CD8-positive, alpha-beta memory T cell (primary cell): ENCODE measurements at regions of chr14 and their contacts with region 1.

Region 1: DNA sequence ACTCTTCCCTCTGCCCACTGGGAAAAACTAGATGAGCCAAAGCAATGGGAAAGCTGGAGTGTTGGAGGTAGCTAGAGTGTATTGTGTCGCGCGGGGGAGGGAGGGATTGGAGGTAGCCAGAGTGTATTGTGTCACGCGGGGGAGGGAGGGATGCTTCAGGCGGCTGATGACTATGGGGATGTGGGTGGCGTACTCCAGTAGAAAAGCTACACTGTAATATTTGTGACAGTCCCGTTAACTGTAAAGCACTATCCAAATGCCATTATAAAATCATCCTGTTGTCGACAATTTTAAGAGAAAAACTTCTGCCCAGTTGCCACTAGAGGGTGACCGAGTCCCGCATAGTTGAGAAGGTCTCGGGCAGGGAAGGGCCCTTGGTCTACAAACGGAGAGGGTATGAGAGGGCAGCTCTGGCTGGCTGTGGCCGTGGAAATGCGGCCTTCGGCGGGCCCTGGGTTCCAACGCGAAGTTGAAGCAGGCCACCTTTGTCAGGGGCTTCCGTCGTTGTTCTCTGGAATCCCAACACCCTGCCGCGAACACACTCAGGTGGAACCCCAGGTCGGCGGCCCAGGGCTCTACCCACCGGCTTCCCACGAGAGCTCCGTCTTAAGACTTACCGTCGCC is 15.1 kb upstream of the PLEK2 start:
- DNase-seq: peak; percentile 54 to 84 (median 63)
- H3K4me3 ChIP-seq: no peak overlapping the region
- H3K4me3 Mint-ChIP-seq: no peak overlapping the region
- H3K27ac ChIP-seq: no peak overlapping the region
- H3K27ac Mint-ChIP-seq: peak overlapping the region in 2 of 8 donors; percentile 20 to 21
- H3K4me1 ChIP-seq: no peaks in the 10 kb centered on the region
- H3K4me1 Mint-ChIP-seq: no peaks in the 10 kb centered on the region
- H3K27me3 ChIP-seq: no peaks in the 10 kb centered on the region
- H3K27me3 Mint-ChIP-seq: peaks cover 10 to 29% of the 10 kb centered on the region in 2 donors

Region 2: DNA sequence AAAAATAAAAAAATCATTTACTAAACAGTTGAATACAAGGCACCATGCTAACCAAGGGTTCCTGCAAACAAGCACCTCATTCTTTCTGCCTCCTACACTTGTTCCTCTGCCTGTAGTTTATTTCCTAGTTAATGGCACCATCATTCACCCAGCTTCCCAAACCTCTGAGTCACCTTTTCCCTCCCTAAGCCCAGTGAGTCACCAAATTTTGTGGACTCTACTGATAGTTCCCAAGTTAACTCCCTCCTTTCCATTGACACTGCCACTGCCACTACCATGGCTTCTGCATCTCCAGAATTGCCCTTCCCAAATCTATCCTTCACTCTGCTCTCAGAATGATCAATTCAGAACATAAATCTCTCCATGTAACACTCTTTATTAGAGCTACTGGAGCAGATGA is 239.9 kb before region 1 on chr14:
- CTCF ChIA-PET with region 1: no interaction called
- POLR2A ChIA-PET with region 1: no interaction called
- DNase-seq: no peak
- H3K4me3 ChIP-seq: no peak overlapping the region
- H3K4me3 Mint-ChIP-seq: no peak overlapping the region
- H3K27ac ChIP-seq: no peak overlapping the region
- H3K27ac Mint-ChIP-seq: no peak overlapping the region
- H3K4me1 ChIP-seq: peaks cover 5% of the 10 kb centered on the region
- H3K4me1 Mint-ChIP-seq: peaks cover 2 to 6% (median 5%) of the 10 kb centered on the region in 3 donors
- H3K27me3 ChIP-seq: no peaks in the 10 kb centered on the region
- H3K27me3 Mint-ChIP-seq: peaks cover 0 to 12% of the 10 kb centered on the region in 2 donors

Region 3: DNA sequence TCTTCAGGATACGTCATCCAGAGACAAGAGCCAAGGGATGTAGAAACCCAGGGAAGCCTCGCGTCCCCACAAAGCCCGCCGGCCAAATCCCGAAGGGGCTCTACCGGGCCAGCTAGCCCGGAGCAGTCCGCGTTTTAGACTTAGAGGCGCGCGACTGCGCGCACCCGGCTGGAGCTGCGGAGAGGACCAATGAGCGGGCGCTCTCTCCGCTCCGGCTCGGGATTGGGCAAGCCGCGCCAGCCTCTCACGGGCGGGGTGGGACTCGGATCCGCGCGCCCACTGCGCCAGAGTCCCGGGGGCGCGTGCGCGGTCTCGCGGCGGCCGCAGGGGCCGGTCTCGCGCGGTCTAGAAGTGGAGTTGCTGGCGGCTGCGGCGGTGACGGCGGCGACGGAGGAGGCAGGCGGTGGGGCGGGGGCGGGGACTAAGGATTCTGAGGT is 186.1 kb before region 1 on chr14:
- CTCF ChIA-PET with region 1: no interaction called
- POLR2A ChIA-PET with region 1: no interaction called
- DNase-seq: peak; percentile 88 to 94 (median 90)
- H3K4me3 ChIP-seq: peak overlapping the region; percentile 81
- H3K4me3 Mint-ChIP-seq: peak overlapping the region; percentile 73 to 97 (median 91)
- H3K27ac ChIP-seq: peak overlapping the region; percentile 56
- H3K27ac Mint-ChIP-seq: peak overlapping the region; percentile 68 to 98 (median 83)
- H3K4me1 ChIP-seq: peaks cover 11% of the 10 kb centered on the region
- H3K4me1 Mint-ChIP-seq: peaks cover 20 to 30% (median 30%) of the 10 kb centered on the region in 3 donors
- H3K27me3 ChIP-seq: no peaks in the 10 kb centered on the region
- H3K27me3 Mint-ChIP-seq: peaks cover 0 to 2% of the 10 kb centered on the region in 2 donors

Region 4: DNA sequence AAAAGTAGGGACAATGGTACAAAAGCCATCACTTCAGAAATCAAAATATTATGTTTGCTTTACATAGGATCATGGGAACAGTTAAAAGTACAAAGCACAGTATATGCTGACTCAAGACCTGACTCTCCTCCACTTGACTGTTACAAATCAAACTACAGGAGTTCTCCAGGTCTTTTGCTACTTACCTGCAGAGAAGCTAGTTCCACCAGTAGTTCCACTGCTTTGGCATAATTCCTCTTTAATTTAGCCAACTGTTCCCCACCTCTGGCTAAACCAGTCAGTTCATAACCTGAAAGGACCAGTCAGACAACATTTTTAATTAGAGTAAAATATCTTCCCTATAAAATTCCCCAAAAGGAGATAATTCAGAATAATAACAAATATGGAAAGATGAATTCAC is 81.5 kb before region 1 on chr14:
- CTCF ChIA-PET with region 1: no interaction called
- POLR2A ChIA-PET with region 1: no interaction called
- DNase-seq: no peak
- H3K4me3 ChIP-seq: no peak overlapping the region
- H3K4me3 Mint-ChIP-seq: no peak overlapping the region
- H3K27ac ChIP-seq: no peak overlapping the region
- H3K27ac Mint-ChIP-seq: no peak overlapping the region
- H3K4me1 ChIP-seq: no peaks in the 10 kb centered on the region
- H3K4me1 Mint-ChIP-seq: no peaks in the 10 kb centered on the region
- H3K27me3 ChIP-seq: no peaks in the 10 kb centered on the region
- H3K27me3 Mint-ChIP-seq: no peaks in the 10 kb centered on the region

Region 5: GRCh38 chr14:67446120-67447032 is 19.3 kb after region 1 on chr14:
- CTCF ChIA-PET with region 1: interaction called, 44 read pairs
- POLR2A ChIA-PET with region 1: no interaction called
- DNase-seq: no peak
- H3K4me3 ChIP-seq: no peak overlapping the region
- H3K4me3 Mint-ChIP-seq: no peak overlapping the region
- H3K27ac ChIP-seq: no peak overlapping the region
- H3K27ac Mint-ChIP-seq: no peak overlapping the region
- H3K4me1 ChIP-seq: no peaks in the 10 kb centered on the region
- H3K4me1 Mint-ChIP-seq: no peaks in the 10 kb centered on the region
- H3K27me3 ChIP-seq: no peaks in the 10 kb centered on the region
- H3K27me3 Mint-ChIP-seq: peaks cover 9 to 23% of the 10 kb centered on the region in 2 donors

Region 6: DNA sequence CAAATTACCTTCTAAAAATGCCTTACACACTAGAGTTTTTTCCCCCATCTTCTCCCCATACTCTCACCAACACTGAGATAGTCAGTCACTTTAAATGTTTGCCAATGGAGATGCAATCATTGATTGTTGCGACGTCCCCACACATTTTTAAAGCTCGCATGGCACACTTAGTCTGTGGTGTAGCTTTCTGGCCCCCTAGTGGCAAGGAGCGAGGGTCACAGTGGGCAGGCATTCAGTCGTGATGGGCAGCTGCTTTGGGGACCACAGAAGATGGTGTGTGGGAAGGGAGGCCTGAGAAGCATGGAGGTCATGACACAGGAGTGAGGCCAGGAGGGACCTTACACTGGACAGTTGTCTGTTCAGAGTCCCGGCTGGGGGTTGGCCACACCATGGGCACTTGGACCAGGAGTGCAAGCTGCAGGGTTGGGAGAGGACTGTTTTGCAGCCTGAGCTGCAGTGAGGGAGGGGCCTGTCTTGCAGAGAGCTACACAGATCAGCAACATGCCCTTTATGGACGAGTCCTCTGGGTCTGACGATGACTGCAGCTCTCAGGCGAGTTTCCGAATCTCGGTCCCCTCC is 144.3 kb after region 1 on chr14:
- CTCF ChIA-PET with region 1: interaction called, 263 read pairs
- POLR2A ChIA-PET with region 1: interaction called, 5 read pairs
- DNase-seq: peak; percentile 51 to 79 (median 59)
- H3K4me3 ChIP-seq: no peak overlapping the region
- H3K4me3 Mint-ChIP-seq: no peak overlapping the region
- H3K27ac ChIP-seq: no peak overlapping the region
- H3K27ac Mint-ChIP-seq: no peak overlapping the region
- H3K4me1 ChIP-seq: no peaks in the 10 kb centered on the region
- H3K4me1 Mint-ChIP-seq: no peaks in the 10 kb centered on the region
- H3K27me3 ChIP-seq: no peaks in the 10 kb centered on the region
- H3K27me3 Mint-ChIP-seq: peaks cover 5% of the 10 kb centered on the region in 2 donors

Region 7: DNA sequence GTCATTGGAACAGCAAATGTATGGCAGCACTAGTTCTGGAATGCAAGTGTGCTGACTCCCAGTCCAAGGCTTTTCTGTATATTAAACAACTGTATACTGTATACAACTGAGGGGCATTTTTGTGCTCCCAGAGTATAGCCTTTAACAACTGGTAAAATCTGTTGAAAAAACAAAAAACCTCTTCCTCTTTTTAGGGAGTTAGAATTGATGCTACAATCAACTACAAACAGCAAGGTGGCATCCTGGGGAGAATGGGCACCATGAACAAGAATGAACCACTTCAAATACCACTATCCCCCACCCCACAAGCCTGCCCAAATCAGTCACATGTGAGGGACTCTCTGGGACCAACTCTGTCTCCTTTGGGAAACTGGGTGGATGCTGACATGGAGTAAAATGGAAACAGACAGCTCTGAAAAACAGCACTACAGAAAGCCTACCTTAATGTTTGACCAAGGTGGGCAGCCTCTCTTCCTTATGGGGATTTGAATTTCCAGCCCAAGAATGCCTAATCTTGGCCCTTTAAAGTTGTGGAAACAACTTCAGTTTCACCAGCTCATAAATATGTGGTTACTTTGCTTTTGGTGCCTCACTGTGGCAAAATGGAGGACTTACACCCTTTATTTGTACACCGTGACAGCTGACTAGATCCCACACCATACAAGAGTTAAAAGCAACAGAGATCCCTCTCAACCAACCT is 239.8 kb after region 1 on chr14:
- CTCF ChIA-PET with region 1: interaction called, 11 read pairs
- POLR2A ChIA-PET with region 1: no interaction called
- DNase-seq: peak in 2 of 5 donors; percentile 25 to 38
- H3K4me3 ChIP-seq: no peak overlapping the region
- H3K4me3 Mint-ChIP-seq: peak overlapping the region in 2 of 7 donors; percentile 17 to 78
- H3K27ac ChIP-seq: no peak overlapping the region
- H3K27ac Mint-ChIP-seq: peak overlapping the region in 7 of 8 donors; percentile 34 to 86 (median 63)
- H3K4me1 ChIP-seq: peaks cover 23% of the 10 kb centered on the region
- H3K4me1 Mint-ChIP-seq: peaks cover 57 to 82% (median 75%) of the 10 kb centered on the region in 3 donors
- H3K27me3 ChIP-seq: no peaks in the 10 kb centered on the region
- H3K27me3 Mint-ChIP-seq: no peaks in the 10 kb centered on the region